OCI-LY7 (cell line): ENCODE measurements at regions of chr17 and their contacts with region 1.

Region 1: GRCh38 chr17:75345514-75346167 is 56.4 kb upstream of the SLC25A19 start:
- DNase-seq: peak; percentile 98
- H3K4me3 ChIP-seq: peak overlapping the region; percentile 75
- H3K27ac ChIP-seq: peak overlapping the region; percentile 94
- H3K4me1 ChIP-seq: peaks cover 85% of the 10 kb centered on the region
- CTCF ChIP-seq: peak; percentile 27; the same call in 1 of the 2 replicates

Region 2: DNA sequence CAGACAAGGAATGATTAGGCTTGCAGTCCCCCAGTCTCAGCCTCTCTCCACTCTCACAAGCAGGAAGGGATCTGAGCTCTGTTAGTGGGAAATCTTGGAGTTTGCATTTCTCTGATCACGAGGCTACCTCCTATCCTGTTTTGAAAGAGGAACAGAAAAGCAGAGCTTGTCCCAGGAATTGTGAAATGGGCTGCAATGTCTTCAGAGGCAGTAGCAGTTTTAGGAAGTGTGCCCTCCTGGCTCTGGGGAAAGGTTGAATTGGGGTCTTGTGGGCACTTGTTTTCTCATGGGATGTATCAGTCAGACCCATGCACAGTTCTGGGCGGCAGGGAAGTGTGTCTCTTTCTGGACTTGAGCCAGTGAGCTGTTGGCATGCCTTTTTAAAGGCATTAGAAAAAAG is 117.3 kb before region 1 on chr17:
- CTCF ChIA-PET with region 1: no interaction called
- POLR2A ChIA-PET with region 1: no interaction called
- intact Hi-C with region 1: no loop called
- DNase-seq: no peak
- H3K4me3 ChIP-seq: no peak overlapping the region
- H3K27ac ChIP-seq: no peak overlapping the region
- H3K4me1 ChIP-seq: no peaks in the 10 kb centered on the region
- CTCF ChIP-seq: no peak

Region 3: GRCh38 chr17:75289115-75289831 is 56.4 kb before region 1 on chr17 and contains the start of gene SLC25A19:
- CTCF ChIA-PET with region 1: interaction called, 20 read pairs
- POLR2A ChIA-PET with region 1: interaction called, 100 read pairs
- intact Hi-C with region 1: loop called (anchors 2 kb)
- DNase-seq: peak; percentile 100
- H3K4me3 ChIP-seq: peak within 1 kb of the TSS; percentile 86
- H3K27ac ChIP-seq: peak within 1 kb of the TSS; percentile 80
- H3K4me1 ChIP-seq: peaks cover 52% of the 10 kb centered on the region
- CTCF ChIP-seq: peak; percentile 69
- total RNA-seq, gene SLC25A19: 113 TPM in 2 replicates

Region 4: GRCh38 chr17:75313941-75314551 is 31.6 kb before region 1 on chr17:
- CTCF ChIA-PET with region 1: interaction called, 10 read pairs
- POLR2A ChIA-PET with region 1: interaction called, 393 read pairs
- intact Hi-C with region 1: no loop called
- DNase-seq: no peak
- H3K4me3 ChIP-seq: no peak overlapping the region
- H3K27ac ChIP-seq: peak overlapping the region; percentile 25
- H3K4me1 ChIP-seq: peaks cover 84% of the 10 kb centered on the region
- CTCF ChIP-seq: no peak

Region 5: DNA sequence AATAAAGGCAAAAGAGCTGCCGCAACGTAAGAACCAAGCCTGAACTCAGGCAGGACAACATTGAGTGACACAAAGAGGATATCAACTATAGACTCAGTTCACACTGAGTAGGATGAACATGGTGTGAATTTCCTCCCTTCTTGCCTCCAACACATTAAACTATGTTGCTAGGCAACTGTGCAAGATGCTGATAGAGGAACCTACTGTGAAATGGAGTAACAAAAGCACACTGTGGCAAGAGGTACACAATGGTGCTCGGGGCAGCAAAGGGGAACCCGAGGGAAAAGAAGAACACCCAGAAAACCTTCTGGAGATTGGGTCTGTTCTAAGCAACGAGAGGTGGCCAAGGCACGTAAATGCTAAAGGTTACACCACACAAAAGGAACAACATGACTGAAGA is 25.7 kb after region 1 on chr17:
- CTCF ChIA-PET with region 1: interaction called, 3 read pairs
- POLR2A ChIA-PET with region 1: interaction called, 25 read pairs
- intact Hi-C with region 1: no loop called
- DNase-seq: peak; percentile 56
- H3K4me3 ChIP-seq: no peak overlapping the region
- H3K27ac ChIP-seq: peak overlapping the region; percentile 1
- H3K4me1 ChIP-seq: peaks cover 80% of the 10 kb centered on the region
- CTCF ChIP-seq: no peak

Region 6: GRCh38 chr17:75393523-75394331 is 48.1 kb after region 1 on chr17:
- CTCF ChIA-PET with region 1: interaction called, 15 read pairs
- POLR2A ChIA-PET with region 1: interaction called, 43 read pairs
- intact Hi-C with region 1: no loop called
- DNase-seq: peak; percentile 97
- H3K4me3 ChIP-seq: peak overlapping the region; percentile 69
- H3K27ac ChIP-seq: peak overlapping the region; percentile 56
- H3K4me1 ChIP-seq: peaks cover 70% of the 10 kb centered on the region
- CTCF ChIP-seq: 0 out of 2 replicates have a peak, but pooled peaks have one; percentile 11

Region 7: DNA sequence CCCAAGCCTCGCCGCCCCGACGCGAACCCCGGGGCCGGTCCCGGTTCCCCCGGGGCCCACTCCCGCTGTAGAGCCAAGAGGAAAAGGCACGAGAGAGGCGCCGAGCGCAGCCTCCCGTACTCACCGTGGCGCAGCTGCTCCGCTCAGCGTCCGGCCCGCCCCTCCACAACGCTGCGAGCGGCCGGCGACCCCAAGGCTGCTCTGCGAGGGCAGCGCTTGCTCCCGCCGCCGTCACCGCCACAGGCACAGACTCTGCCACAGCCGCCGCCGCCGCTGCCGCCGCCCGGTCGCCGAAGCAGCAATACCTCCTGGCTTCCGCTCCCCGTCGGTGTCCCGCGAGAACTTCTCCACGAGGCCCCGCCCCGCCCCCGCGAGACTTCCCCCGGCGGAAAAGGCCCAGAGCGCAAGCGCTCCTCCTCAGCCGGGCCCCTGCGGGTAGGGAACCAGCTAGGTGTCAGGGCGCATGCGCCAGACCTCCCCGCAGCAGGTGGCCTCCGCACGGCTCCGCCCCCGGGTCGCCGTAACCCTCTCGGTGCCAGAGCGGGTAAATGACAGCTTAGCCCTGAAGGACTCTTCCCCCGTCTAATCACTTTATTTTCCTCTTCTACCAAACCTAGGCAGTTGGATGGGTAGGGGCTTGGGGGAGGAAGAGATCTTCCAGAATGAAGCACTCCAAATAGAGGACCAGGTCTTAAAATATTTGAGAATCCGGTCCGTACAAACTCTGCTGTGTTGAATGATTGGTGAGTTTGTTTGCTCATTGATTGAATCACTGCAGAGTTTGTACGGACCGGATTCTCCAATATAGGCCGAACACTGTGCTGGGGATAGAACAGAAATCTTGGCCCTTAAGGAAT is 60.0 kb after region 1 on chr17 and contains the start of gene GRB2:
- CTCF ChIA-PET with region 1: interaction called, 4 read pairs
- POLR2A ChIA-PET with region 1: interaction called, 30 read pairs
- intact Hi-C with region 1: loop called (anchors 1 kb)
- DNase-seq: peak; percentile 100
- H3K4me3 ChIP-seq: peak within 1 kb of the TSS; percentile 84
- H3K27ac ChIP-seq: peak within 1 kb of the TSS; percentile 81
- H3K4me1 ChIP-seq: peaks cover 62% of the 10 kb centered on the region
- CTCF ChIP-seq: no peak
- total RNA-seq, gene GRB2: 240 and 244 TPM in 2 replicates

Region 8: DNA sequence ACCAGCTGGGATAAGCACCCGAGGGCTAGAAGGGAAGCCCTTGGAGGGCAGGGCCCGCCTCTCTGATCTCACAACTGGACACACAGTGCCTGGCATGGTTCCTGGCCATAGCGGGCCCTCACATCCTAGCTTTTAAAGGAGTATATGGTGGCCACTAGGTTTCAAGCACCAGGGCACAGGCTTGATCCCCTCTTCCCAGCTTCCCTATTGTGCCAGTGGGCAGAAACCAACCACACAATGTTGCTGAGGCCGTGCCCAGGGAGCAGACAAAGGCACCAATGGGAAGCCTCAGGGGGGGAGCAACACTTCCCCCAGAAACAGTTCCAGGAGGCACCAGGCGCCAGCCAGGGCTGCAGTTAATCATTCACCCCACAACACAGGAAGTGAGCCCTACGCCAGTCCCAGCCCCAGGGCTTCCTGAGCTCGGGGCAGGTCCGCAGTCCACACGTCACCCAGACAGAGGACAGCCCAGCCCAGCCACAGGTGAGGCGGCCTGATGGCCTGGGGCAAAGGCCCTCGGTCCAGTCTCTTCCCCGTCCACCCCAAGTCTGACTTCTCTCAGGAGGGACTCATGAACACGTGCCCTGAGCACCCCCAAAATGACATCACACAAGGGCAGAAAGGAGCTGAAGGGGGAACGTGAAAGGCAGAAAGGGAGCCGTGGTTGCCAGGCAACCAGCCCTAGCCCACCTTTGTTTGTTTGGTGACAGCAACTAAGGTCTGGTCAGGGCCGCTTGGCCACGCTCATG is 300.4 kb after region 1 on chr17:
- CTCF ChIA-PET with region 1: no interaction called
- POLR2A ChIA-PET with region 1: no interaction called
- intact Hi-C with region 1: no loop called
- DNase-seq: no peak
- H3K4me3 ChIP-seq: no peak overlapping the region
- H3K27ac ChIP-seq: no peak overlapping the region
- H3K4me1 ChIP-seq: peaks cover 4% of the 10 kb centered on the region
- CTCF ChIP-seq: no peak